Mammary epithelial cell (primary cell): ENCODE measurements at regions of chr19 and their contacts with region 1.

Region 1: DNA sequence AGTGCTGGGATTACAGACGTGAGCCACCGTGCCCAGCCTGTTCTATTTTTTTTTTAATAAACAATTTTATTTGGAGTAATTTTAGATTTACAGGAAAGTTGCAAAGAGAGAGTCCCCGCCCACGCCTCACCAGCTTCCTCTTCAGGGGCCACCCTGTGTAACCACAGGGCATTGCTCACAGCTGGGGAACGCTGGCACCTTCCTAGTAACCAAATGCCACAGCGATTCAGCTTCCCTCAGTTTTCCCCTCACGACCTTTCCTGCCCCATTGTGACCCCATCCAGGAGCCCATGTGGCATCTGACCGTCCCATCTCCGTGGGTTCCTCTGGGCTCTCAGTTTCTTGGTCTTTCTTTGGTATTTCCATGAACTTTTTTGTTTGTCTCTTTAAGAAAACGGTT is 83.9 kb downstream of the GNG7 start:
- DNase-seq: peak; percentile 77
- H3K4me3 ChIP-seq: no peak overlapping the region
- H3K27ac ChIP-seq: peak overlapping the region; percentile 88
- H3K4me1 ChIP-seq: peaks cover 26% of the 10 kb centered on the region
- H3K27me3 ChIP-seq: no peaks in the 10 kb centered on the region
- CTCF ChIP-seq: no peak

Region 2: GRCh38 chr19:2438178-2438864 is 180.3 kb before region 1 on chr19:
- CTCF ChIA-PET with region 1: no interaction called
- dilution Hi-C with region 1: loop called (anchors 5 kb)
- in situ Hi-C with region 1: no loop called
- intact Hi-C with region 1: no loop called
- DNase-seq: no peak
- H3K4me3 ChIP-seq: no peak overlapping the region
- H3K27ac ChIP-seq: no peak overlapping the region
- H3K4me1 ChIP-seq: no peaks in the 10 kb centered on the region
- H3K27me3 ChIP-seq: no peaks in the 10 kb centered on the region
- CTCF ChIP-seq: no peak

Region 3: GRCh38 chr19:2750808-2751443 is 132.3 kb after region 1 on chr19:
- CTCF ChIA-PET with region 1: no interaction called
- dilution Hi-C with region 1: no loop called
- in situ Hi-C with region 1: no loop called
- intact Hi-C with region 1: no loop called
- DNase-seq: no peak
- H3K4me3 ChIP-seq: no peak overlapping the region
- H3K27ac ChIP-seq: no peak overlapping the region
- H3K4me1 ChIP-seq: peaks cover 5% of the 10 kb centered on the region
- H3K27me3 ChIP-seq: no peaks in the 10 kb centered on the region
- CTCF ChIP-seq: no peak

Region 4: DNA sequence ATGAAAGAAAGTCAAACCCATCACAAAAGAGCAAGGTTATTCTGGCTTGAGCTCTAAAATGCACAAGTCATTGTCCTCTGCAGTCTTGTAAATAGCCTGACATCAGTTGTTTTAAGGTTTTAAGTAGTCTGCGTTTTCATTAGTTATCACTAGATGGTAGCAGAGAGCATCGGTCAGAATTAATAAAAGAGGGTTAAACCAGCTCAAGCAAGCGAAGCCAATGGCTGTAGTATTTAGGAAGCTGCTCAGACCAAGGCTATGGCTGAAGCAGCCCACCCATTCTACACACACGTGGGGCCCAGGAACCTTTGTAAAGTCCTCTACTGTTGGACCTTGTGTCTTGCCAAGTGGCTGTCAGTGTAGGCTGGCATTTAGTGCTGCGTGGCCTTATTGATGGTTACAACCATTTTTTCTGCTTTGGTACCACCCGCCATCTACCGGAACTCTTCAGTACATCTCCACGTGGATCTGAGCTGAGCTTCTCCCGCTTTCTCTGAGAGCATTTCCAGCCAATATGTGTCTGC is 268.8 kb after region 1 on chr19:
- CTCF ChIA-PET with region 1: no interaction called
- dilution Hi-C with region 1: no loop called
- in situ Hi-C with region 1: no loop called
- intact Hi-C with region 1: no loop called
- DNase-seq: peak; percentile 66
- H3K4me3 ChIP-seq: peak overlapping the region in 2 of 3 experiments; percentile 19 to 35
- H3K27ac ChIP-seq: no peak overlapping the region
- H3K4me1 ChIP-seq: no peaks in the 10 kb centered on the region
- H3K27me3 ChIP-seq: no peaks in the 10 kb centered on the region
- CTCF ChIP-seq: peak; percentile 66 to 68

Region 5: GRCh38 chr19:2926341-2927014 is 307.9 kb after region 1 on chr19:
- CTCF ChIA-PET with region 1: no interaction called
- dilution Hi-C with region 1: no loop called
- in situ Hi-C with region 1: no loop called
- intact Hi-C with region 1: no loop called
- DNase-seq: no peak
- H3K4me3 ChIP-seq: no peak overlapping the region
- H3K27ac ChIP-seq: no peak overlapping the region
- H3K4me1 ChIP-seq: peaks cover 9% of the 10 kb centered on the region
- H3K27me3 ChIP-seq: no peaks in the 10 kb centered on the region
- CTCF ChIP-seq: no peak